HEK293T (cell line): ENCODE measurements at regions of chr1 and their contacts with region 1.

Region 1: DNA sequence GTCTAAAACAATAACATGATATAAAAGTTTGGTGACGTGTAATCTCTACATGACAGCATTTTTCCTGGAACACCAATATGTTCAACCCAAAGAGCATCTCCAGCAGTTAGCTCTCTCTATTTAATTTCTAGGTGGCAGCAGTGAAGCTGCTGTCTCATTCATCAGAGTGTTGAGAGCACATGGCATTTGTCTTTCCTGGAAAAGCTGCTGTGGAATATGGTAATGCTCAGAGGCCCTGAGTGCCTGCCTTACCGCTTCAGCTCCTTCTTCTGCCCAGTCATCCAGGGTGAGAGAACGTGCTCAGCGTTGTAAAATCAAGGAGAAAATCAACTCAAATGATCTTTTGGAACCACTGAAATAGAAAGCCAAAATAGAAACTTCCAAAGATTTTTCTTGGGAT is 640.7 kb downstream of the ADGRL2 start:
- DNase-seq: no peak

Region 2: DNA sequence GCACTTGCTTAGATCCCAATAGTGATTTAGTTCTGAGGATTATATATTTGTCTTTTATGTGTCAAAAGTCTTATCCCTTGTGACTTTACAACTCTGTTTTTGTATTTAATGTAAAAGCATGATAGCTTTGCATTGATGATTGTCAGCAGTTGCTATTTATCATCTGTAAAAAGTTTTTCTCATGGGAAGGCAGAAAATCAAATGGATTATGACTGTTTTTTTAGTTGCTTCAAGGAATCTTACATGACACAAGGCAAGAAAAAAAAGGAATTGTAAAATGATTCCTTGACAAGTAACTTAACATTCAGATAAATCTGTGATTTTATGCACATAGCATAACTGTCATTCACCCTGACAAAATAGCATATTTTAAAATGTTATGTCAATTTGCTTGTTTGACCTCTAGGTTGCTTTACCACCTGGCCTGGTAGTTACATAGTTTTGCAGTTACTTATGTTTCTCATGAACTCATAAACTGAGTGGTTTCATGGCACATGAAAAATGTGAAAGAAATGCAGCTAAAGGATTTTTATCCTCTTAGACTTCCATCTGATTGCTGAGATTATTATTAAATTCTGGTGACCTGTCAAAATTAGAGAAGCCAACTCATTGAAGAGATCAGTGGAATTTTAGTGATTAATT is 18.1 kb before region 1 on chr1:
- CTCF ChIA-PET with region 1: interaction called, 12 read pairs
- POLR2A ChIA-PET with region 1: no interaction called
- DNase-seq: no peak

Region 3: DNA sequence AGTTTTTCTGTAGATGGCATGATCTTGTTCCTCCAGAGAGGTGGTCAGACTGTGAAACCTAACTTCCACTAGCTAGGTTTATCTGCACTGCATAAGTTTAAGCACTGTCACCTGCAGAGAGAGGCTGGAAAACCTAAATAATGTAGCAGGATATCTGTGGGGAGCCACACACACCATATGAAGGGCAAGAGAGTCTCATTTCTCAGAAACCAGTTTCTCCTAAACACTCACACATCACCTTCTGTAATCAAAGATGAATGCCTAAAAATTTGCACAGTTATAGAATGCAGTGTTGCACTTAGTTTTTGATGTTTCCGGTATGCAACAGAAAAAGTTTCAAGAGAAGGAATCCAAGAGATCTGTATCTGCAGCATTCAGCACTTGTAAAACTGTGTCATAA is 13.9 kb after region 1 on chr1:
- CTCF ChIA-PET with region 1: no interaction called
- POLR2A ChIA-PET with region 1: no interaction called
- DNase-seq: no peak

Region 4: DNA sequence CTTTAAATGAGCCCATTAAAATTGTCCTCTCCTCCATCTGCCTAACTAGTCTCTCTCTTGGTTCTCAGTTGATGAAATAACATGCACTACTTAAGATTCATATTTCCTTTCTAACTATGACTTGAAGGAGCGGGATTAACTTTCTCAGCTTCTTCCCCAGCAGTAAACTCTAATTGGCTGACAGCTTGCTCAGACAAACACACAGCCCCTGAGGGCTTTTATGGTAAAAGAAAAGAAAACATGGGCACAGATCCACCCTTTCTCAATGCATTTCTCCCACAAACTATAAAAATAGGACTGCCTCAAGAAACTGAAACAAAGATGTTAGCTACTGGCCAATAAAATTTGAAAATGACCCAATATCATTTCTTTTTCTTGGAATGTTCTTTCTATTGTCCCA is 62.4 kb after region 1 on chr1:
- CTCF ChIA-PET with region 1: no interaction called
- POLR2A ChIA-PET with region 1: no interaction called
- DNase-seq: no peak